ENCODE measurements at regions of chr4 and their contacts with region 1.

Region 1: GRCh38 chr4:114615436-114615885 is 16.9 kb downstream of the UGT8 start:
- DNase-seq: no peak
- H3K4me3 ChIP-seq: no peak overlapping the region
- H3K27ac ChIP-seq: no peak overlapping the region
- H3K4me1 ChIP-seq: no peaks in the 10 kb centered on the region
- H3K27me3 ChIP-seq: no peaks in the 10 kb centered on the region
- CTCF ChIP-seq: no peak
- POLR2A ChIP-seq: no peak

Region 2: DNA sequence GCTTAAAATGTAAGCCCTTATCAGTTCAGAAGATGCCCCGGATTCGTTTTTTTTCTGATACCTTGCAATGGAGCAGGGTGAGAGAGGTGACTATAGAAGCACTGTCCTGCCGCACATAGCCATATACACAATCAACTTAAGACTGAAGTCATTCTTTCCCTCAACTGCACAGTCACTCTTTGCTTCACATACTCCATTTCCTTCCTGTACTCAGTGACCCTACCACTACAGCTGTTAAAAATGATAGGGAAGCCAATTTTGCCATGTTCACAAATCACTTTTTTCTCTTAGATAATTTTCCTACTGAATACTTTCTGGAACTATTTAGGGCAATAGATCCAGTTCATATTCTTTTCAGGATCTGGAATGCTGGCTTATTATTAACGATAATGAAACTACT is 1266.0 kb before region 1 on chr4:
- intact Hi-C with region 1: loop called (anchors 5 kb)
- DNase-seq: no peak
- H3K4me3 ChIP-seq: no peak overlapping the region
- H3K27ac ChIP-seq: no peak overlapping the region
- H3K4me1 ChIP-seq: no peaks in the 10 kb centered on the region
- H3K27me3 ChIP-seq: no peaks in the 10 kb centered on the region
- CTCF ChIP-seq: no peak
- POLR2A ChIP-seq: no peak

Measured in breast epithelium (tissue), 4 donors.